ENCODE measurements at regions of chr5 and their contacts with region 1.

Region 1: GRCh38 chr5:150350524-150351344 is 6.8 kb upstream of the TCOF1 start:
- DNase-seq: no peak
- H3K4me3 ChIP-seq: no peak overlapping the region
- CTCF ChIP-seq: peak; percentile 79

Region 2: DNA sequence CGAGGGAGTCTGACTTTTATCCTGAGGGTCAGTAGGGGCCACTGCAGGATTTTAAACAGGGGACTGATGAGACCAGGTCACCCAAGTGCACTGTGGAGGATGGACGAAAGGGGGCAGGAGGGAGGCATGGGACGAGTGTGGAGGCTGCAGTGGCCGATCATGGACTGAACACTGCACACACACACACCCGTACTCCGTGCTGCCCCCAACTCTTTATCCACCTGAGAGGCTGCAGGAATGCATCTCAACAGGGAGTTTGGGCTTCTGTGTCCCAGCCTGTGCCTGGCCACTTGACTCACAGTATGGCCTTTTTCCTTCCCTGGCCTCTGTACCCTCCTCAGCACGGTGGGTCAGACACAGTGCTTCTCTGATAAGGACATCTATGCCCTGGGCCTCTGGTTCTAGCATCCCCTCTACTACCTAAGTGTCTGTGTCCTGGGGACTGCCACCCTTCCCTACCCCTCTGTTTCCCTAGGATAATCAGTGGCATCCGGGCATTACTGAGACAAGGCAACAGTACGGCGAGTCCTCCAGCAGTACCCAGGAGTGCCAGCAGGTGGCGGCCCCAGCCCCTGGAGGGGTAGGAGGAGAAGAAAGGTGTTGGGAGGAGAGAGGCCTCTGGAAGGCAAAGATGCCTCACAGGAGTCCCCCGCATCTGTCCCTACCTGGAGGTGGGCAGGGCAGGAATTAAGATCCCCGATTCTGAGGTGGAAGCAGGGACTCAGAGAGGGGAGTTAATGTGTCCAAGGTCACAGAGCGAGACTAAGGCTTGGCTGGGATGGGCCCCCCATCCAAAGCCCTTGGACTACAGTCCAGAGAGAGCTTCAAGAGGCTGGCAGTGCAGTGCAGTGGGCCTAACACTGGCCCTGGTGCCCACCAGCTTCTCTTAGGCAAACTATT is 189.2 kb before region 1 on chr5:
- CTCF ChIA-PET with region 1: interaction called, 20 read pairs
- POLR2A ChIA-PET with region 1: no interaction called
- DNase-seq: no peak
- H3K4me3 ChIP-seq: no peak overlapping the region
- CTCF ChIP-seq: peak; percentile 98

Region 3: GRCh38 chr5:150272526-150272925 is 78.2 kb before region 1 on chr5:
- CTCF ChIA-PET with region 1: interaction called, 265 read pairs
- POLR2A ChIA-PET with region 1: interaction called, 3 read pairs
- DNase-seq: no peak
- H3K4me3 ChIP-seq: no peak overlapping the region
- CTCF ChIP-seq: peak; percentile 81

Region 4: DNA sequence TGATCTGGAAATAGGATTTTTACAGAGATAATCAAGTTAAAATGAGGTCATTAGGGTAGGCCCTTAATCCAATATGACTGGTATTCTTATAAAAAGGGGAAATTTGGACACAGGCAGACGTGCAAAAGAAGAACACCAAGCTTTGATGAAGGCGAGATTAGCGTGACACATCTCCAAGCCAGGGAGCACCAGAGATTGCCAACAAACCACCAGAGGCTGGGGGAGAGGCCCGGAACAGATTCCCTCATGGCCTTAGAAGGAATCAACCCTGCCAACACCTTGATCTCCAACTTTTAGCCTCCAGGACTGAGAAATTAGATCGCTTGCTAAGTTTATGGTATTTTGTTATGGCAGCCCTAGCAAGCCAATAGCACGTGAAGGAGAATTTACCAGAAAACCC is 37.2 kb before region 1 on chr5:
- CTCF ChIA-PET with region 1: no interaction called
- POLR2A ChIA-PET with region 1: no interaction called
- DNase-seq: no peak
- H3K4me3 ChIP-seq: no peak overlapping the region
- CTCF ChIP-seq: no peak

Region 5: GRCh38 chr5:150329881-150330876 is 20.6 kb before region 1 on chr5:
- CTCF ChIA-PET with region 1: interaction called, 26 read pairs
- POLR2A ChIA-PET with region 1: no interaction called
- DNase-seq: no peak
- H3K4me3 ChIP-seq: no peak overlapping the region
- CTCF ChIP-seq: no peak

Region 6: DNA sequence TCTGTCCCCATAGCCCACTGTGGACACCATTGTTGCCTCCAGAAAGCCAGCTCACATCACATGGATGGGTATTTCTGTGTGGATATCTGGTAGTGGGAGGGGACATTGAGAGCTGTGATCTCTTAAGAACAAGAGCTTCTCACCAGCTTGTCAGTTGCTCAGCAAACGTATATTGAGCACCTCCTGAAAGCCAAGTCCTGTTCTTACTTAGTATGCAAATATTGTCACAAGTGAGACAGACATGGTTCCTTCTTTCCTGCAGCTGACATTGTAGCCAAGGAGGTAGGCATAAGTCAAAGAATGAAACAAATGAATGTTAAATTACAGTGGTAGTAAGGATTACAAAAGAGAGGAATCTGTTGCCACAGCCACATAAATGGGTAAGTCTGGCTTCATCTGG is 10.6 kb after region 1 on chr5:
- CTCF ChIA-PET with region 1: interaction called, 16 read pairs
- POLR2A ChIA-PET with region 1: no interaction called
- DNase-seq: no peak
- H3K4me3 ChIP-seq: no peak overlapping the region
- CTCF ChIP-seq: no peak

Region 7: GRCh38 chr5:150386024-150386864 is 35.5 kb after region 1 on chr5:
- CTCF ChIA-PET with region 1: no interaction called
- POLR2A ChIA-PET with region 1: no interaction called
- DNase-seq: no peak
- H3K4me3 ChIP-seq: no peak overlapping the region
- CTCF ChIP-seq: no peak

Measured in AG04449 (cell line).